K562 (cell line): ENCODE measurements at regions of chr12 and their contacts with region 1.

Region 1: GRCh38 chr12:95998611-95999286 is 2.6 kb upstream of the HAL start:
- DNase-seq: peak; percentile 20 to 61 (median 44)
- ATAC-seq: peak; percentile 97
- H3K4me3 ChIP-seq: no peak overlapping the region
- H3K27ac ChIP-seq: no peak overlapping the region
- H3K4me1 ChIP-seq: peaks cover 0 to 5% of the 10 kb centered on the region in 2 experiments; a peak in 1 of 5 replicates
- H3K27me3 ChIP-seq: peaks cover 0 to 16% of the 10 kb centered on the region in 2 experiments; a peak in 3 of 5 replicates
- CTCF ChIP-seq: peak; percentile 72 to 81 (median 72)
- EP300 ChIP-seq: no peak
- POLR2A ChIP-seq: no peak
- RAD21 ChIP-seq: peak; percentile 80

Region 2: DNA sequence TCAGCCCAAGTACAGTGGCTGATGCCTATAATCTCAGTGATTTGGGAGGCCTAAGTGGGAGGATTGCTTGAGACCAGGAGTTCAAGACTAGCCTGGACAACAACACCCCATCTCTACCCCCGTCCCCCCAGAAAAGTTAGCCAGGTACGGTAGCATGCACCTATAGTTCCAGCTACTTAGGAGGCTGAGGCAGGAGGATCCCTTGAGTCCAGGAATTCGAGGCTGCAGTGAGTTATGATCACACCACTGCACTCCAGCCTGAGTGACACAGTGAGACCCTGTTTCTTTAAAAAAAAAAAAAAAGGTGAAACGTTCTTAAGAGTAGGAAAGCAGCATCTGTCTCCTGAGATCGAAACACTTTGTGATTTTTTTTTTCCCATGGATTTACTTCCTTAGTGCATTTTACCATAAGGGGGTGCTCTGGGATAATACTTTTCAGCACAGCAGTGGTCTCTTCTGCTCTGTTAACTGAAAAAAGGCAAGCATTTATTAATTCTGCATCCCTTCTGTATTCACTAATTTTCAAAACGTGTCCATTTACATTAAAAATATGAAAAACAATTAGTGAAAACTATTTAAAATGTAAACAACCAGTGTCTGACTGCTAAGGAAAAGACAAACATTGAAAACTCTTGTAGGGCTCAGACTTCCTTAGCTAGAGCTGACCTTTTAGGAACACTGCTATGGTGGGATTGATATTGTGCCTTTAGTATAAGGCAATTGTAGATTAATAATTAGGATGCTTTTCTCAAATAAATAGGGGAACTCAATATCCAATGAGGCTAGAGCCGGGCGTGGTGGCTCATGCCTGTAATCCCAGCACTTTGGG is 416.3 kb before region 1 on chr12:
- CTCF ChIA-PET with region 1: no interaction called
- POLR2A ChIA-PET with region 1: no interaction called
- in situ Hi-C with region 1: no loop called
- intact Hi-C with region 1: loop called (anchors 2 kb)
- DNase-seq: peak in 1 of 4 experiments; percentile 11
- ATAC-seq: peak; percentile 59
- H3K4me3 ChIP-seq: no peak overlapping the region
- H3K27ac ChIP-seq: no peak overlapping the region
- H3K4me1 ChIP-seq: no peaks in the 10 kb centered on the region; a peak in 1 of 5 replicates
- H3K27me3 ChIP-seq: no peaks in the 10 kb centered on the region; a peak in 1 of 5 replicates
- CTCF ChIP-seq: peak; percentile 22 to 66 (median 37); a peak in 4 of 6 replicates
- EP300 ChIP-seq: no peak
- POLR2A ChIP-seq: no peak
- RAD21 ChIP-seq: peak; percentile 44 to 69

Region 3: DNA sequence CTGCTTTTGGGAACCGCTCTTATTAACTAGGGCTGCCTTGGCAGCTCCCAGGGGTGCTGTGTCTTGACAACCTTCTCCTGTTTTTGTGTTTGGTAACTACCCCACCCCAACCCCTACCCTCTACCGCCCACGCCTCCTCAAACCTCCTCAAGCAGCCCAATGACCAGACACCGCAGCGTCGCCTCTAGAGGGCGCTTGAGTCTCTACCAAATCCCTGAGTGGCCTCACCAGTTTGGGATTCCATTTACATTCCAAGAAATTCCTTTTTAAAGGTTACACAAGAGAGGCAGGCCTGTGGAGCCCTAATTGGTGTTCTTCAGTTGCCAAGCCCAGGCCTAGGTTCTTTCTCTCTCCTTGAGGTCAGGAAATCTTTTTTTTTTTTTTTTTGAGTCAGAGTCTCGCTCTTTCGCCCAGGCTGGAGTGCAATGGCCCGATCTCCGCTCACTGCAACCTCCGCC is 375.1 kb before region 1 on chr12:
- CTCF ChIA-PET with region 1: no interaction called
- POLR2A ChIA-PET with region 1: no interaction called
- in situ Hi-C with region 1: no loop called
- intact Hi-C with region 1: loop called (anchors 10 kb)
- DNase-seq: peak; percentile 60 to 68 (median 62)
- ATAC-seq: peak; percentile 98
- H3K4me3 ChIP-seq: no peak overlapping the region
- H3K27ac ChIP-seq: no peak overlapping the region
- H3K4me1 ChIP-seq: no peaks in the 10 kb centered on the region; a peak in 1 of 5 replicates
- H3K27me3 ChIP-seq: peaks cover 7 to 13% of the 10 kb centered on the region in 2 experiments; a peak in 3 of 5 replicates
- CTCF ChIP-seq: peak; percentile 73 to 81 (median 76)
- EP300 ChIP-seq: no peak
- POLR2A ChIP-seq: no peak
- RAD21 ChIP-seq: peak; percentile 34 to 68

Region 4: GRCh38 chr12:95674088-95674600 is 324.6 kb before region 1 on chr12:
- CTCF ChIA-PET with region 1: no interaction called
- POLR2A ChIA-PET with region 1: no interaction called
- in situ Hi-C with region 1: no loop called
- intact Hi-C with region 1: no loop called
- DNase-seq: no peak
- ATAC-seq: no peak
- H3K4me3 ChIP-seq: no peak overlapping the region
- H3K27ac ChIP-seq: no peak overlapping the region
- H3K4me1 ChIP-seq: no peaks in the 10 kb centered on the region
- H3K27me3 ChIP-seq: peaks cover 2 to 19% of the 10 kb centered on the region in 2 experiments; a peak in 3 of 5 replicates
- CTCF ChIP-seq: no peak
- EP300 ChIP-seq: no peak
- POLR2A ChIP-seq: no peak
- RAD21 ChIP-seq: no peak

Region 5: GRCh38 chr12:95820102-95820703 is 178.5 kb before region 1 on chr12:
- CTCF ChIA-PET with region 1: no interaction called
- POLR2A ChIA-PET with region 1: no interaction called
- in situ Hi-C with region 1: no loop called
- intact Hi-C with region 1: loop called (anchors 5 kb)
- DNase-seq: peak; percentile 22 to 32 (median 28)
- ATAC-seq: no peak
- H3K4me3 ChIP-seq: no peak overlapping the region
- H3K27ac ChIP-seq: no peak overlapping the region
- H3K4me1 ChIP-seq: no peaks in the 10 kb centered on the region
- H3K27me3 ChIP-seq: no peaks in the 10 kb centered on the region; a peak in 3 of 5 replicates
- CTCF ChIP-seq: peak; percentile 31 to 54 (median 38); a peak in 4 of 6 replicates
- EP300 ChIP-seq: no peak
- POLR2A ChIP-seq: no peak
- RAD21 ChIP-seq: peak; percentile 40 to 57; a peak in 3 of 4 replicates

Region 6: GRCh38 chr12:95859344-95859816 is 139.4 kb before region 1 on chr12:
- CTCF ChIA-PET with region 1: no interaction called
- POLR2A ChIA-PET with region 1: no interaction called
- in situ Hi-C with region 1: no loop called
- intact Hi-C with region 1: no loop called
- DNase-seq: peak; percentile 21 to 59 (median 32)
- ATAC-seq: peak; percentile 76
- H3K4me3 ChIP-seq: peak overlapping the region; percentile 78
- H3K27ac ChIP-seq: peak overlapping the region; percentile 92
- H3K4me1 ChIP-seq: peaks cover 0 to 7% of the 10 kb centered on the region in 2 experiments; a peak in 3 of 5 replicates
- H3K27me3 ChIP-seq: no peaks in the 10 kb centered on the region
- CTCF ChIP-seq: 0 out of 6 replicates have a peak, but pooled peaks of 1 of the 3 experiments have one; percentile 5
- EP300 ChIP-seq: no peak
- POLR2A ChIP-seq: no peak
- RAD21 ChIP-seq: no peak

Region 7: GRCh38 chr12:95918194-95918993 is 80.4 kb before region 1 on chr12:
- CTCF ChIA-PET with region 1: no interaction called
- POLR2A ChIA-PET with region 1: no interaction called
- in situ Hi-C with region 1: no loop called
- intact Hi-C with region 1: loop called (anchors 1 kb)
- DNase-seq: peak; percentile 17 to 53 (median 25)
- ATAC-seq: peak; percentile 92
- H3K4me3 ChIP-seq: no peak overlapping the region
- H3K27ac ChIP-seq: no peak overlapping the region
- H3K4me1 ChIP-seq: no peaks in the 10 kb centered on the region
- H3K27me3 ChIP-seq: no peaks in the 10 kb centered on the region; a peak in 1 of 5 replicates
- CTCF ChIP-seq: peak; percentile 64 to 75 (median 75)
- EP300 ChIP-seq: no peak
- POLR2A ChIP-seq: no peak
- RAD21 ChIP-seq: peak; percentile 42 to 76

Region 8: DNA sequence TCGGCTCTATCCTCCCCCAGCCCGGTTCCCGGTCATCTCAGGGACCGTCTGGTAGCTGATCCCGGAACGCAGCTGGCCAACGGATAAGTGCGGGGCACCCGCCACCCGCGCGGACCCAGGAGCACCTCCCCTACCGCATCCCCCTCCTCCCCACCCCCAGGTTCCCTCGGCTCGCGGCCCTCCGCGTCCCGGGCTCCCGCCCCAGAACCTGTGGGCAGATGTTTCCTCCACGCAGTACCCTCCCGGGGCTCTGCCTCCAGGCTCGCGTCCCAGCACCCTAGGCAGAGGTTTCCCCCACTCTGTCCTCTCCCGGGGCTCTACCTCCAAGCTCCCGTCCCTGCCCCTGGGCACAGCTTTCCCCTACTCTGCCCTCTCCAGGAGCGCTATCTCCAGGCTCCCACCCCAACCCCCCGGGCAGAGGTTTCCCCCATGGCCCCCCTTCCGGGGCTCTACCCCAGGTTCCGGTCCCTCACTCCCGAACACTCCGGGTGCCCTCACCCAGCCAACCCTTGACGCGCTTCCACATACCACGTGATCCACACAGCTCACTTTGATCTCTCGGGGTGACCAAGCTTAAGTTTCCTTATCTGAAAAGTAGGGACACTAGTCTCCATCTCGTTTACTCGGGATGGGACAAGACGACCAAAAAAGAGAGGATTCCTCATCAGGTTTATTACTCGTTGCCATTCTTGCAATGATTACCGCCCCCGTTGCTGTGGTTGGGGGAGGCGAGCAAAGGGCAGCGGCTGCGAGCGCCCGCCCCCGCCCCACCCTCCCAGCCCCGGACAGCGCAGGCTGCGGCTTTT is 56.0 kb before region 1 on chr12 and contains the start of gene CCDC38:
- CTCF ChIA-PET with region 1: no interaction called
- POLR2A ChIA-PET with region 1: no interaction called
- in situ Hi-C with region 1: no loop called
- intact Hi-C with region 1: loop called (anchors 1 kb)
- DNase-seq: peak in 2 of 4 experiments; percentile 14 to 15
- ATAC-seq: no peak
- H3K4me3 ChIP-seq: no peak within 1 kb of the TSS
- H3K27ac ChIP-seq: no peak within 1 kb of the TSS
- H3K4me1 ChIP-seq: peaks cover 0 to 10% of the 10 kb centered on the region in 2 experiments; a peak in 2 of 5 replicates
- H3K27me3 ChIP-seq: peaks cover 3 to 14% of the 10 kb centered on the region in 2 experiments; a peak in 3 of 5 replicates
- CTCF ChIP-seq: no peak
- EP300 ChIP-seq: no peak
- POLR2A ChIP-seq: no peak
- RAD21 ChIP-seq: no peak
- polyA plus RNA-seq, gene CCDC38: not detected